PC-9 (cell line): ENCODE measurements at regions of chr3 and their contacts with region 1.

Region 1: DNA sequence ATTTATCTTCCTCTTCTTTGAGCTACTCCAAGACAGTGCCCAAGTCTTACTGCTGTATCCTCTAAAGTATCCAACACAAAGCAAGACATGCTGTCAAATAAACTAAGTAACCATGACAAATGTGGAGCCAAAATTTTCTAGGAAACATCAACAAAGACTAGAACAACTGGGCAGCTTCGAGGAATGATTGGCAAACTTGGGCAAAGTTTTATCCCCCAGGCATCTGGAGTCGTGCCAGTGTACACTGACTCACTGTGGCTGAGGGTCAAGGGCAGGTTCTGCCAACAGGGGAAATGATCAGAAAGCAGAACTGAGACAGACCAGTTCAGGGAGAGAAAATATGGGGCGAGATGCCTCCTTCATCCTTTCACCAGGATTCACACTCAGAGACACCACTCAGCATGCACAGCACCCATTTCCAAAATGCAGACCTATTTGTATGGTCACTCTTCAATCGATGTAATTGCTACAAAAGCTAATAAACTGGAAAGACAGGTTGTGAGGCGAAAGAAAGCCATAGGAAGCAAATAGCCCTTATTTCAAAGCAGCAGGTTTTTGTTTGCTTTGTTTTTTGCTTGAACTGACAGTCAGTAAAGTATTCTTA is 65.7 kb downstream of the MB21D2 start:
- DNase-seq: peak; percentile 99 to 100
- H3K4me3 ChIP-seq: no peak overlapping the region
- H3K27ac ChIP-seq: peak overlapping the region; percentile 17
- H3K4me1 ChIP-seq: peaks cover 27% of the 10 kb centered on the region
- H3K27me3 ChIP-seq: no peaks in the 10 kb centered on the region
- CTCF ChIP-seq: no peak

Region 2: GRCh38 chr3:192879336-192880106 is 27.6 kb after region 1 on chr3:
- CTCF ChIA-PET with region 1: interaction called, 3 read pairs
- POLR2A ChIA-PET with region 1: interaction called, 3 read pairs
- intact Hi-C with region 1: loop called (anchors 1 kb)
- DNase-seq: peak; percentile 92 to 100
- H3K4me3 ChIP-seq: peak overlapping the region; percentile 37; the same call in 1 of the 2 replicates
- H3K27ac ChIP-seq: no peak overlapping the region
- H3K4me1 ChIP-seq: peaks cover 42% of the 10 kb centered on the region
- H3K27me3 ChIP-seq: no peaks in the 10 kb centered on the region
- CTCF ChIP-seq: no peak

Region 3: DNA sequence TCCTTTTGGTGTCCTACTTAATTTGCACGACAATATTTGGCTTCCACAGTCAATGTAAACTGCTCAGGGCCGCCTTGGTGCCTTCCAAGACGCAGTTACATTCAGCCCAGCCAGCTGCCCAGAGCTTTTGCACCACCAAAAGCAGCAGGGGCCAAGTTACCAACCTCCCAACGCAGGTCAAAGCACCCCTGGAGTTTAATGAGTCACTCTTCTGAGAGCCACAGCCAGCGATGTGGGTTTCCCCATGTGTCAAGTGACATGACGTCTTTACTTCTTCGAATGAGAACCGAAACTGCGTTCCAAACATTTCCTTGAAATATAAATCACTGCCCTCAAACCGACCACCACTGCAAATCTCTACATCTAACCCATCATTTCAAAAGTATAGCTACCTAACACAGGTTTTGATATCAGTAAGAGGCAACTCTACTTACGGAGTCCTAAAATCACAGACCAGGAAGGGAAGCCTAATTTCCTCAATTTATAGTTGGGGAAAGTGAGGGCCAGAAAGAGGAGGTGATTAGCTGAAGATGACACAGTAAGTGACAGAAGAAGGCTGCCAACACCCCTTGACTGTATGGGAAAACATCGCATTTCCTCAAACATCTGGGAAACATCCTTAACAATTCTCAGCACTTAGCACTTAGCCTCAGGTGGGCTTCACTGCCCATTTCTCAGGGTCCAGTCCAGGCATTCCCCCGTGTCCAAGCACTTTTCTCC is 41.2 kb after region 1 on chr3:
- CTCF ChIA-PET with region 1: no interaction called
- POLR2A ChIA-PET with region 1: interaction called, 3 read pairs
- intact Hi-C with region 1: loop called (anchors 2 kb)
- DNase-seq: peak; percentile 89 to 99
- H3K4me3 ChIP-seq: peak overlapping the region; percentile 44; the same call in 1 of the 2 replicates
- H3K27ac ChIP-seq: peak overlapping the region; percentile 88
- H3K4me1 ChIP-seq: peaks cover 96% of the 10 kb centered on the region
- H3K27me3 ChIP-seq: no peaks in the 10 kb centered on the region
- CTCF ChIP-seq: no peak

Region 4: GRCh38 chr3:192906949-192907348 is 55.0 kb after region 1 on chr3:
- CTCF ChIA-PET with region 1: no interaction called
- POLR2A ChIA-PET with region 1: interaction called, 20 read pairs
- intact Hi-C with region 1: loop called (anchors 1 kb)
- DNase-seq: peak in 1 of 2 experiments; percentile 84
- H3K4me3 ChIP-seq: no peak overlapping the region
- H3K27ac ChIP-seq: peak overlapping the region; percentile 89
- H3K4me1 ChIP-seq: peaks cover 58% of the 10 kb centered on the region
- H3K27me3 ChIP-seq: no peaks in the 10 kb centered on the region
- CTCF ChIP-seq: no peak

Region 5: DNA sequence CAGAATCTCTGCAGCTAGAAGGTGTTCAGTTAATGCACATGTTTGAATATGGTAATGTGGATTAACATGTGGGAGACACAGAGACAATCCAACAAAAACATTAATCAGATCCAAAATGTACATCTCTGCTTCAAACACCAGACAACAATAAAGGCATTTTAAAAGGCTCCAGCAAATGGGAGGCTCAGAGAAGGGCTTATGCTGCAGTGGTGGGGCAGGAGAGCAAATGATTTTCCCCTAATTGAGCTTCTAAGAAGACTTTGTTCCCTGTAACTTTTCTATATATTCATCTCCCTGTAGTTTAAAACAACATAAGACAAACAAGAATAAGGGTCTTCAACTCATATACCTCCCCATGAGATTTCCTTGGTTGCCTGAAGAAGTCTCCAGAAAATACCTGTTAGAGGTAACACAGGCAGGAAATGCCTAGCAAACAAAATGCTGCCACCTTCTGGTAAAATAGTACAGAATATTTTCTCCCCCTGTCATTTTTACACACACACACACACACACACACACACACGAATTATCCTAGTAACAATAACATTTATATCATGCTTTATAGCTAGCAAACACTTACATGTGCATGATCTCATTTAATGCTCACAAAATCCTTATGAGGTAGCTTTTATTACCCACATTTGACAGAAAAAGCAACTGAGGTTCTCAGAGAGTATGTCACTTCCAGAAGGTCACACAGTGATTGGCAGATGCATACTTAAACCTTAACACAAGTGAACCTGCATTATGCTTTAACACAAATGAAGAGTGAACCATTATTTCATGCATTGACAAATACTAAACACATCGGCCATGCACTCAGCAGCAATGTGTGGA is 189.1 kb after region 1 on chr3:
- CTCF ChIA-PET with region 1: no interaction called
- POLR2A ChIA-PET with region 1: no interaction called
- intact Hi-C with region 1: loop called (anchors 1 kb)
- DNase-seq: peak in 1 of 2 experiments; percentile 58
- H3K4me3 ChIP-seq: no peak overlapping the region
- H3K27ac ChIP-seq: no peak overlapping the region
- H3K4me1 ChIP-seq: no peaks in the 10 kb centered on the region
- H3K27me3 ChIP-seq: no peaks in the 10 kb centered on the region
- CTCF ChIP-seq: peak; percentile 81